ENCODE measurements at regions of chr1 and their contacts with region 1.

Region 1: GRCh38 chr1:145845514-145846161 is at the start of gene NUDT17:
- DNase-seq: peak; percentile 65 to 84 (median 71)
- H3K4me3 ChIP-seq: peak within 1 kb of the TSS; percentile 75
- H3K4me3 Mint-ChIP-seq: no peak within 1 kb of the TSS
- H3K27ac ChIP-seq: peak within 1 kb of the TSS; percentile 68
- H3K27ac Mint-ChIP-seq: peak within 1 kb of the TSS in 7 of 8 donors; percentile 51 to 89 (median 83)
- H3K4me1 ChIP-seq: peaks cover 10% of the 10 kb centered on the region
- H3K4me1 Mint-ChIP-seq: peaks cover 5 to 7% (median 6%) of the 10 kb centered on the region in 3 donors
- H3K27me3 ChIP-seq: no peaks in the 10 kb centered on the region
- H3K27me3 Mint-ChIP-seq: no peaks in the 10 kb centered on the region
- total RNA-seq, gene NUDT17: 1.6 to 2.2 TPM

Region 2: DNA sequence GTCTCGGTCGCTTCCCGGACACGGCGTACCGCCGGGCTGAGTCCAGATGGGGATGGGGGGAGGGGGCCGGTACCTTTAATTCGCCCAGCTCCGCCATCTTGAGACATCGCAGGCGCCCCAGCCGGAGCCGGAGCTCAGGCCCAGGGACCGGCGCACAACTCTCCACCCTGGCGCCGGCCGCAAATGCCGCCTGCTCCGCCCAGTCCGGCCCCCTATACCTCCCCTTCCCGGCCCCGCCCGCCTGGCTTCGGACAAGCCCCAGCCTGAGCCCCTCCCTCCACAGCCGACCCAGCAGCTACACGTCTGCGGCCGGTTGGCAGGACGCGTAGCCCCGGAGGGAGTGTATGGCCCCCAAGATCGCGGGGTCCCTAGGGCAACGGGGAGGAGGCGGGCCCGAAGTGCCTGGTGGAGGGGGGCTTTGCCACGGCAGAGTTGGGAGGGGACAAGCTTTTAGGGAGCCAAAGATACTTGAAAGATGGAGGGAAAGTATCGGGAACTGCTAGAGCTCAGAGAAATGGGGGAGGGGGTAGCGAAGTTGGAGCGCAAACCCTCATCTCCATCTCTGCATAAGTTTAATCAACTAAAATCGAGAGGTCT is 13.4 kb after region 1 on chr1 and contains the start of gene PIAS3:
- CTCF ChIA-PET with region 1: interaction called, 160 read pairs
- POLR2A ChIA-PET with region 1: interaction called, 44 read pairs
- DNase-seq: peak; percentile 74 to 86 (median 80)
- H3K4me3 ChIP-seq: peak within 1 kb of the TSS; percentile 80
- H3K4me3 Mint-ChIP-seq: peak within 1 kb of the TSS; percentile 93 to 99 (median 97)
- H3K27ac ChIP-seq: peak within 1 kb of the TSS; percentile 56
- H3K27ac Mint-ChIP-seq: peak within 1 kb of the TSS; percentile 77 to 96 (median 90)
- H3K4me1 ChIP-seq: peaks cover 13% of the 10 kb centered on the region
- H3K4me1 Mint-ChIP-seq: peaks cover 11 to 29% (median 29%) of the 10 kb centered on the region in 3 donors
- H3K27me3 ChIP-seq: no peaks in the 10 kb centered on the region
- H3K27me3 Mint-ChIP-seq: peaks cover 0 to 1% of the 10 kb centered on the region in 2 donors
- total RNA-seq, gene PIAS3: 16.7 to 18.3 TPM

Region 3: GRCh38 chr1:145891587-145892485 is 46.2 kb after region 1 on chr1:
- CTCF ChIA-PET with region 1: interaction called, 29 read pairs
- POLR2A ChIA-PET with region 1: no interaction called
- DNase-seq: peak in 4 of 5 donors; percentile 6 to 59 (median 32)
- H3K4me3 ChIP-seq: no peak overlapping the region
- H3K4me3 Mint-ChIP-seq: no peak overlapping the region
- H3K27ac ChIP-seq: no peak overlapping the region
- H3K27ac Mint-ChIP-seq: peak overlapping the region in 1 of 8 donors; percentile 83
- H3K4me1 ChIP-seq: no peaks in the 10 kb centered on the region
- H3K4me1 Mint-ChIP-seq: peaks cover 0 to 1% (median under 1%) of the 10 kb centered on the region in 3 donors
- H3K27me3 ChIP-seq: no peaks in the 10 kb centered on the region
- H3K27me3 Mint-ChIP-seq: no peaks in the 10 kb centered on the region

Region 4: GRCh38 chr1:145927063-145927886 is 81.6 kb after region 1 on chr1 and contains the start of gene RBM8A:
- CTCF ChIA-PET with region 1: interaction called, 14 read pairs
- POLR2A ChIA-PET with region 1: interaction called, 6 read pairs
- DNase-seq: peak; percentile 85 to 97 (median 96)
- H3K4me3 ChIP-seq: peak within 1 kb of the TSS; percentile 89
- H3K4me3 Mint-ChIP-seq: peak within 1 kb of the TSS in 3 of 7 donors; percentile 47 to 84 (median 57)
- H3K27ac ChIP-seq: peak within 1 kb of the TSS; percentile 93
- H3K27ac Mint-ChIP-seq: peak within 1 kb of the TSS in 4 of 8 donors; percentile 74 to 92 (median 82)
- H3K4me1 ChIP-seq: peaks cover 29% of the 10 kb centered on the region
- H3K4me1 Mint-ChIP-seq: peaks cover 10 to 22% (median 20%) of the 10 kb centered on the region in 3 donors
- H3K27me3 ChIP-seq: no peaks in the 10 kb centered on the region
- H3K27me3 Mint-ChIP-seq: no peaks in the 10 kb centered on the region
- total RNA-seq, gene RBM8A: 387 to 397 TPM

Region 5: GRCh38 chr1:145978854-145979759 is 133.5 kb after region 1 on chr1:
- CTCF ChIA-PET with region 1: interaction called, 35 read pairs
- POLR2A ChIA-PET with region 1: interaction called, 3 read pairs
- DNase-seq: peak; percentile 52 to 89 (median 80)
- H3K4me3 ChIP-seq: peak overlapping the region; percentile 55
- H3K4me3 Mint-ChIP-seq: no peak overlapping the region
- H3K27ac ChIP-seq: peak overlapping the region; percentile 76
- H3K27ac Mint-ChIP-seq: no peak overlapping the region
- H3K4me1 ChIP-seq: peaks cover 69% of the 10 kb centered on the region
- H3K4me1 Mint-ChIP-seq: peaks cover 6 to 34% (median 14%) of the 10 kb centered on the region in 3 donors
- H3K27me3 ChIP-seq: no peaks in the 10 kb centered on the region
- H3K27me3 Mint-ChIP-seq: no peaks in the 10 kb centered on the region

Region 6: DNA sequence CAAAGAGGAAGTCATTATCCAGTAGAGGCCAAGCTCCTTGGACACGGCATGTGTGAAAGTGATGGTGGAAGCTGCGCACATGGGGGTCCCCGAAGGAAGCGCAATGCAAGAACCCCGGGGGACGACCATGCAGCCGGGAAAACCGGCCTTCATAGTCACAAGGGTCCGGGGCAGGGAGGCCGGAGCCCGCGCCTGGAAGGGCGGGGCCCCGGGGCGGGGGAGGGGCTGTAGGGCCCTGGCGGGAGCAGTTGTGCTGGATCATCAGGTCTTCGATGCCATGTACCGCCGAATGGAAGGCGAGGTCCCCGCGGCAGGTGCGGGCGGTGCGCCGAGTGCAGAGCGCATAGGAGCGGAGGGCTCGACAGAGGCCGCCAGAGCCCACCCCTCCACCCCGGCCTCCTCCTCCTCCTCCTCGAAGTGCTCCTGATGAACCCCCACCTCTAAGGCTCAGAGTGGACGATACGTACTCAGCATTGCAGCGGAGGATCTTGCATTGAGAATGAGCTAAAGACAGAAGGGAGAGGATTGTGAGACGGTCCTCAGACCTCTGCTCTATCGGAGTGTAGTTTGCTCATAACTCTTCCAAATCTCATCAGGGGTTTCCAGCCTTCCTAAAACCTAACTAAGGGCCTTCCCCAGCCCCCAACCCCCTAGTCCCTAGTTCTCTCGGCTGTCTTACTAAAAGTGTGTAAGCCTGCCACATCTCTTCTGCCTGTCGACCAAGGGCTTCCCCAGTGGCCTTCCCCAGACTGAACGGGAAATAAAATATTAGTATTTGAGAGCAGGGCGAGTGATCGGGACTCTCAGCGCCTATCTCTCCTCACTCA is 173.8 kb after region 1 on chr1:
- CTCF ChIA-PET with region 1: interaction called, 65 read pairs
- POLR2A ChIA-PET with region 1: interaction called, 3 read pairs
- DNase-seq: no peak
- H3K4me3 ChIP-seq: no peak overlapping the region
- H3K4me3 Mint-ChIP-seq: peak overlapping the region in 5 of 7 donors; percentile 17 to 69 (median 29)
- H3K27ac ChIP-seq: no peak overlapping the region
- H3K27ac Mint-ChIP-seq: peak overlapping the region in 2 of 8 donors; percentile 11 to 49
- H3K4me1 ChIP-seq: peaks cover 8% of the 10 kb centered on the region
- H3K4me1 Mint-ChIP-seq: peaks cover 8 to 14% (median 9%) of the 10 kb centered on the region in 3 donors
- H3K27me3 ChIP-seq: peaks cover 31% of the 10 kb centered on the region
- H3K27me3 Mint-ChIP-seq: peaks cover 21 to 74% of the 10 kb centered on the region in 2 donors

Measured in CD8-positive, alpha-beta memory T cell (primary cell).